CD4-positive, alpha-beta memory T cell (primary cell): ENCODE measurements at regions of chr5 and their contacts with region 1.

Region 1: DNA sequence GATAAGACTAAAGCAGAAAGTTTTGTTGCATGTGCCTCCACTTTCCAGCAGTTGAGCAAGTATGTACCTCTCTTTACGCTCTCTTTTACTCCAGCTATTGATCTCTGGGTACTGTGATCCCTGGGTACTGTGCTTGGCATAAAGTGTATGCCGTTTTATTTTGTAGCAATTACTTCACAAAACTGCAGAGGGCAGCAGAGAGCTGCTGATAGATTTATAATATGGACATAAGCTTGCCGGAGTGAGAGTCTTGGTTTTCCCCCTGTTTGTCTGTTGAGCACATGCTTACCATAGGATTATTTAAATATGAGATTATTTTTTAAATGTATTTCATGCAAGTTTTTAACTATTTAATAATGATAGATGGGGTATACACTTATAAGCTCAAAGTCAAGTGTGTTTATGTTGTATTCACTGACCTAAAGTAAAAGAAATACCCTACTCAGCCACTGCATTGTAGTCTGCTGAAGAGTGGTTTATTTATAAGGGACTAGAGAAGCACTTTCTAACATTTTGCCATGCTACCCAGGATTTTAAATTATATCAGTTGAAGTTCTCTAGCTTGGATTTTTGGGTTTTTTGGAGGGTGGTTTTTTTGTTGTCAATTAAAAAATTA is 13.0 kb downstream of the TTC1 start:
- DNase-seq: peak; percentile 58 to 70 (median 67)
- H3K4me3 ChIP-seq: no peak overlapping the region
- H3K4me3 Mint-ChIP-seq: peak overlapping the region in 5 of 8 donors; percentile 5 to 76 (median 55)
- H3K27ac ChIP-seq: no peak overlapping the region
- H3K27ac Mint-ChIP-seq: peak overlapping the region; percentile 39 to 95 (median 85)
- H3K4me1 ChIP-seq: peaks cover 21% of the 10 kb centered on the region
- H3K4me1 Mint-ChIP-seq: peaks cover 20 to 40% (median 30%) of the 10 kb centered on the region in 4 donors
- H3K27me3 ChIP-seq: no peaks in the 10 kb centered on the region
- H3K27me3 Mint-ChIP-seq: no peaks in the 10 kb centered on the region

Region 2: DNA sequence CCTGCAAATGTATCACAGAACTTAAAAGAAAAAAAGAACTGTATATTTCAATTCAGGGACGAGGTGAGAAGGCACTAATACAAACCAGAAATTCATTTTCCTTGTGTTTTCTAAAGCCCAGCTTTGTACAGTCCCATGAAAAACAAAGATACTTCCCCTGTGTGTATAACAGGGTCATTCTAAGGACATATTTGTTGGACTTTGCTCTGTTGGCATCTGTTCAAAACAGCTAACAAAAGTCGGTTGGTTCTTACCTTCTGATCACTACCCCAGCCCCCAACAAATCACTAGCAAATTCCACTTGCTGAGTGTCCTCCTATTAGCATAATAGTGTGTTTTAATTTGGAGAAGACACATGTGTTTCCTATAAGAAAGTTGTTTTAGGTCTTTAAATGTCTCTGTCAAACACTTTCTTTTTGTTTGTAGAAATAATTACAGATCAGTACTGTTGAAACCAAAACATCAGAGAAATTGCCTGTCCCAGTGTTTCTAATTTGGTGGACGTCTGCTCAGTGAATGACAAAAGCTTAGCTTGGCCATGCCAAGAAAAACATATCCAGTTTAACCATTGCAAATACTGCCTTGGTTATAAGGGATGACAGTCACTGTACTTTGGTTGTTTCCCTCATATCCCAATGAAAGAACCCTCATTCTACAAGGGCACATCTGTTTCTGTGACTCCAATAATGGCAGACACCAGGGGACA is 1402.7 kb before region 1 on chr5:
- CTCF ChIA-PET with region 1: no interaction called
- POLR2A ChIA-PET with region 1: no interaction called
- intact Hi-C with region 1: no loop called
- DNase-seq: no peak
- H3K4me3 ChIP-seq: no peak overlapping the region
- H3K4me3 Mint-ChIP-seq: no peak overlapping the region
- H3K27ac ChIP-seq: no peak overlapping the region
- H3K27ac Mint-ChIP-seq: no peak overlapping the region
- H3K4me1 ChIP-seq: no peaks in the 10 kb centered on the region
- H3K4me1 Mint-ChIP-seq: no peaks in the 10 kb centered on the region
- H3K27me3 ChIP-seq: no peaks in the 10 kb centered on the region
- H3K27me3 Mint-ChIP-seq: no peaks in the 10 kb centered on the region

Region 3: GRCh38 chr5:160039810-160040470 is 18.0 kb after region 1 on chr5:
- CTCF ChIA-PET with region 1: interaction called, 15 read pairs
- POLR2A ChIA-PET with region 1: no interaction called
- intact Hi-C with region 1: no loop called
- DNase-seq: no peak
- H3K4me3 ChIP-seq: no peak overlapping the region
- H3K4me3 Mint-ChIP-seq: no peak overlapping the region
- H3K27ac ChIP-seq: no peak overlapping the region
- H3K27ac Mint-ChIP-seq: no peak overlapping the region
- H3K4me1 ChIP-seq: no peaks in the 10 kb centered on the region
- H3K4me1 Mint-ChIP-seq: peaks cover 0 to 3% (median 0%) of the 10 kb centered on the region in 4 donors
- H3K27me3 ChIP-seq: no peaks in the 10 kb centered on the region
- H3K27me3 Mint-ChIP-seq: no peaks in the 10 kb centered on the region

Region 4: DNA sequence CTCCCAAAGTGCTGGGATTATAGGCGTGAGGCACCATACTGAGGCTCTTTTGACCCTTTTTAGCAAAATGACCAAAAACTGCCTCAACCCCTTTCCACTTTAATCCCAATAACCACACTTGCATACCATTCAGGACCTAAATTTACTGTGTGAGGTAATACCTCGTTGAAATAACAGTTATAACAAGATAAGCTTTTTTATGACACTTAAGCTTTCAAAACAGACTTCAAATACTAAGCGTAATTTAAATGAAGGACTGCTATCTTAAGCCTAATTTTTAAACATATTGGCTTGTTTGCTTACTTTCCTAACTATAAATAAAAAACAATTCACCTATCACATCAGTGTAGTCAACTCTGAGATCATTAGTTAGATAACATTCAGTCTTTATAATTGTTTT is 59.6 kb after region 1 on chr5:
- CTCF ChIA-PET with region 1: interaction called, 13 read pairs
- POLR2A ChIA-PET with region 1: no interaction called
- intact Hi-C with region 1: no loop called
- DNase-seq: no peak
- H3K4me3 ChIP-seq: no peak overlapping the region
- H3K4me3 Mint-ChIP-seq: no peak overlapping the region
- H3K27ac ChIP-seq: no peak overlapping the region
- H3K27ac Mint-ChIP-seq: no peak overlapping the region
- H3K4me1 ChIP-seq: no peaks in the 10 kb centered on the region
- H3K4me1 Mint-ChIP-seq: peaks cover 0 to 3% (median under 1%) of the 10 kb centered on the region in 4 donors
- H3K27me3 ChIP-seq: no peaks in the 10 kb centered on the region
- H3K27me3 Mint-ChIP-seq: no peaks in the 10 kb centered on the region

Region 5: DNA sequence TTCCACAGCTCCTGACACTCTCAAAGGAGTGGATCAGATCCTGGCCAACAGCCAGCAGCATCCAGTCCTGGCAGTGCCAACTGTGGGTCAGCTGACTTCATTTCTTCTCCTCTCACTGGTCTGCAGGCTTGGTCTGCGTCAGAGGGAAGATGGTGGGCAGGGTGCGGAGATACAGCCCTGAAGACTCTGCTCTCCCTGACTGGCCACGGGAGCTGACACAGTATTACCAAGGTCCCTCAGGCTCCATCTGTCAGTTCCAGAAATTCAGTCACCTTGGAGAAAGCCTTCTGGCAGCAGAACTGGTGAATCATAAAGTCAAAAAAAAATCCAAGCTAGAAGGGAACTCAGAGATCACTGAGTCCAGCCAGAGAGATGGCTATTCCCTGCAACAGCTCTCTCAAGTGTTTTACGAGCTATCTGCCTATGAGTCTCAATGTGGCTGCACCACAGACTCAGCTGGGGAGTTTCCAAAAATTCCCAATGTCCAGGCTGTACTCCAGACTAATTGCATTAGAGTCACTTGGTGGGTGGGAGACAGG is 320.5 kb after region 1 on chr5:
- CTCF ChIA-PET with region 1: interaction called, 179 read pairs
- POLR2A ChIA-PET with region 1: interaction called, 5 read pairs
- intact Hi-C with region 1: loop called (anchors 1 kb)
- DNase-seq: no peak
- H3K4me3 ChIP-seq: no peak overlapping the region
- H3K4me3 Mint-ChIP-seq: no peak overlapping the region
- H3K27ac ChIP-seq: no peak overlapping the region
- H3K27ac Mint-ChIP-seq: no peak overlapping the region
- H3K4me1 ChIP-seq: no peaks in the 10 kb centered on the region
- H3K4me1 Mint-ChIP-seq: no peaks in the 10 kb centered on the region
- H3K27me3 ChIP-seq: no peaks in the 10 kb centered on the region
- H3K27me3 Mint-ChIP-seq: peaks cover 2 to 3% of the 10 kb centered on the region in 2 donors